Activated CD4-positive, alpha-beta memory T cell treated with anti-CD3 and anti-CD28 coated beads for 36 hours (primary cell): ENCODE measurements at regions of chr21 and their contacts with region 1.

Region 1: GRCh38 chr21:30408782-30409494 is 13.1 kb downstream of the KRTAP13-1 start:
- DNase-seq: peak; percentile 10
- H3K4me3 Mint-ChIP-seq: no peak overlapping the region
- H3K27ac Mint-ChIP-seq: no peak overlapping the region
- H3K4me1 Mint-ChIP-seq: no peaks in the 10 kb centered on the region
- H3K27me3 Mint-ChIP-seq: peaks cover 4% of the 10 kb centered on the region

Region 2: GRCh38 chr21:30340441-30341241 is 68.3 kb before region 1 on chr21:
- CTCF ChIA-PET with region 1: no interaction called
- POLR2A ChIA-PET with region 1: interaction called, 3 read pairs
- intact Hi-C with region 1: loop called (anchors 2 kb)
- DNase-seq: peak; percentile 37
- H3K4me3 Mint-ChIP-seq: no peak overlapping the region
- H3K27ac Mint-ChIP-seq: no peak overlapping the region
- H3K4me1 Mint-ChIP-seq: no peaks in the 10 kb centered on the region
- H3K27me3 Mint-ChIP-seq: peaks cover 3% of the 10 kb centered on the region

Region 3: DNA sequence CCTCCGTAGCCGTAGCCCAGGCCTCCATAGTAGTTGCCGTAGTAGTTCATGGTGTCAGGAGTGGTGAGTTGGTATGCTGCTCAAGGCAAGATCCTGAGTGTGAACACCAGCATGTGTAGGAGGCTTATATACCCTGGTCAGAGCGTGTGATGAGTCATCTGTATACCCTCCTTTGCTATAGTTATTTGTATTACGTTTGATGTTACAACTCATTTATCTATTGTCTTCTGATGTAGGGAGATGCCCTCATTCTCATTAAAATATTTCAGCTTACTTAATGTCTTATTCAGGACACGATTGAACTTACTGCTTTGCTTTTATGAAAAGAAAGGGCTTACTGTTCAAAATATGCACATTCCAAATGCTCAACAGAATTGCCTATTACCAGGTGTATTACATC is 93.1 kb after region 1 on chr21 and contains the start of gene KRTAP19-5:
- CTCF ChIA-PET with region 1: no interaction called
- POLR2A ChIA-PET with region 1: no interaction called
- intact Hi-C with region 1: no loop called
- DNase-seq: no peak
- H3K4me3 Mint-ChIP-seq: no peak within 1 kb of the TSS
- H3K27ac Mint-ChIP-seq: no peak within 1 kb of the TSS
- H3K4me1 Mint-ChIP-seq: no peaks in the 10 kb centered on the region
- H3K27me3 Mint-ChIP-seq: peaks cover 3% of the 10 kb centered on the region
- total RNA-seq, gene KRTAP19-5: not detected

Region 4: DNA sequence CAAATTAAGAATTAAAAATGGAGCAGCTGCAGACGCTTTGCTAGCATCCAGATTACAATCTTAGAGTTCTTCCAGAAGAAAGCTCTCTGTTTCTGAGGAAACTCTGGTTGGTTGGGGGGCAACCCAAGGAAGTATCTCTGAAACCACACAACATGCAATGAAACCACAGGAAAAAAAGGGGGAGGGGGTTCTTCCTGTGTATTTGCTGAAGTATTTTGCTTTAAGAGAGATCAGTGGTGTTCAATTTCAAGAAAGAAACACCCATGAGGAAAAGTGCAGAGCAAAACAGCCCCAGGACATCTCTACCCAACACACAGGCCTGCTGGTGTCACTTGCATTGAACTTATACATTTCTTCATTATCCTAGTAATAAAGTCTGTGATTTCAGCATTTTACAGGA is 954.8 kb after region 1 on chr21:
- CTCF ChIA-PET with region 1: no interaction called
- POLR2A ChIA-PET with region 1: no interaction called
- intact Hi-C with region 1: no loop called
- DNase-seq: no peak
- H3K4me3 Mint-ChIP-seq: no peak overlapping the region
- H3K27ac Mint-ChIP-seq: no peak overlapping the region
- H3K4me1 Mint-ChIP-seq: peaks cover 46% of the 10 kb centered on the region
- H3K27me3 Mint-ChIP-seq: no peaks in the 10 kb centered on the region